OCI-LY7 (cell line): ENCODE measurements at regions of chr2 and their contacts with region 1.

Region 1: DNA sequence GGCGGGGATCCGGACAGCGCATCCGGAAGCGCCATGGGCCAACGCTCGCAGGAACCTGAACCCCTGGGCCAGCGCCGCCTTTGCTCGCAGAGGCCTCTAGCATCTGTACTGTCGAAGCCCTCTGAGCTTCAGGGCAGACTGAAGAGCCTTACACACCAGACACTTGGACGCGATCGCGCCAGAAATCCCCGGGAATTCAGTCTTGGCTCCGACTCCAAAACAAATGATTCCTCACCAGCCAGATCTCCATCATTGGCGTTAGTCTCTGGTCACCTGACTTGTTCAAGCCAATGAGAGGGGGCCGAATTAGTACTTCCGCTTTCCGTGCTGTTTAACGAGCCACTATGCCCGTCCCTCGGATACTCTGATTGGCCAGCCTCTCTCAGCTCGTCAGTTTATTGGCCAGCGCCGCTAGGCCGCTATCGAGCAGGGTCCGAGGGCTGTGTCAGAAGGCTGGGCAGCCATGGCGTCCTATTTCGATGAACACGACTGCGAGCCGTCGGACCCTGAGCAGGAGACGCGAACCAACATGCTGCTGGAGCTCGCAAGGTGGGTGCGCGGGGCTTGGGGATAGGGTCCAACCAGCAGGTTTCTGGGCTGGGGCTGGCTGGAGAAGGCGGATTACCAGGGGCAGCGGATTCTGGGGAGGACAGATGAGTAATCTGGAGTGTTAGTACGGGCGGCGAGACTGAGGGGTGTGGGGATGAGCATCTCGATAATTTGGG is at the start of gene RNF181:
- DNase-seq: peak; percentile 97
- H3K4me3 ChIP-seq: peak within 1 kb of the TSS; percentile 89
- H3K27ac ChIP-seq: peak within 1 kb of the TSS; percentile 42
- H3K4me1 ChIP-seq: peaks cover 23% of the 10 kb centered on the region
- CTCF ChIP-seq: no peak
- total RNA-seq, gene RNF181: 98.4 and 179 TPM in 2 replicates

Region 2: GRCh38 chr2:85524336-85524933 is 71.0 kb before region 1 on chr2:
- CTCF ChIA-PET with region 1: no interaction called
- POLR2A ChIA-PET with region 1: no interaction called
- intact Hi-C with region 1: no loop called
- DNase-seq: no peak
- H3K4me3 ChIP-seq: no peak overlapping the region
- H3K27ac ChIP-seq: no peak overlapping the region
- H3K4me1 ChIP-seq: peaks cover 14% of the 10 kb centered on the region
- CTCF ChIP-seq: no peak

Region 3: DNA sequence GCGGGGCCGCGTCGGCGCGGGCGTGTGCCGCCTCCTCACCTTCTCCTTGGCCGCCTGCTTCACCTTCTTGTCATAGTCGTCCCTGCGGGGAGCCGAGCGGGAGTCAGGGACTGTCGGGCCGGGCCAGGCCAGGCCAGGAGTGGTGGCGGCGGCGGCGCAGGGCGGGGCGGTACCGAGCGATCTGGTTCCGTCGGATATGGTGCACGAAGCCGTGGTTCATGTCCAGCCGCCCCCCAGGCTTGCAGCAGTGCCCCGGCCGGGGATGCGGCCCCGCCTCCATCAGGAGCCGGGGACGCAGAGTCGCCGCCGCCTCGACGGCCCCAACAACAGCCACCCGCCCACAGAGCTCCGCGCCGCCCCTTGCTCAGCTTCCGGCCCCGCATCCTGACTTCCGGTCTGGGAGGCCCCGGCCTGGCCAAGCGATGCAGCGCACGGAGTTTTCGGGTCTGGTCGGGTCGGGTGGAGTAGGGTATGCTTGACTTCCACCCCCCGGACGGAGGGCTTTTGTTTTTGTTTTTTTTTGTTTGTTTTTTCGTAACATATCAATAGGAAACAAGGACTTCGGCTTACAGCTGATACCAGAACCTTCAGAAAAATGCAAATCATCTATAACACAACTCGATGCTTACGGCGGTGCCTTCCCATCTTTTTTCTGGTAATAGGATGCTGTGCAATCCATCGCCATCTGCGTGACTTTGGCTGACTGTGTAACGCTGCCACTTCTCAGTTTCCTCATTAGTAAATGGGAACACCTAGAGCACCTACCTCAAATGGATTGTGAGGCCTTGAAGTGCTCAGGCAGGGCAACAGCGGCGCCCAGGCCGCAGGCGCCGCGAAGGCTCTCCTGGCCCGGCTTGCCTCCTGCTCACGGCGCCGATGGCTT is 16.5 kb after region 1 on chr2 and contains the start of gene C2orf68:
- CTCF ChIA-PET with region 1: interaction called, 3 read pairs
- POLR2A ChIA-PET with region 1: interaction called, 24 read pairs
- intact Hi-C with region 1: no loop called
- DNase-seq: peak; percentile 93
- H3K4me3 ChIP-seq: peak within 1 kb of the TSS; percentile 97
- H3K27ac ChIP-seq: peak within 1 kb of the TSS; percentile 55
- H3K4me1 ChIP-seq: peaks cover 25% of the 10 kb centered on the region
- CTCF ChIP-seq: no peak
- total RNA-seq, gene C2orf68: 62.0 and 86.7 TPM in 2 replicates